ENCODE measurements at regions of chr4 and their contacts with region 1.

Region 1: DNA sequence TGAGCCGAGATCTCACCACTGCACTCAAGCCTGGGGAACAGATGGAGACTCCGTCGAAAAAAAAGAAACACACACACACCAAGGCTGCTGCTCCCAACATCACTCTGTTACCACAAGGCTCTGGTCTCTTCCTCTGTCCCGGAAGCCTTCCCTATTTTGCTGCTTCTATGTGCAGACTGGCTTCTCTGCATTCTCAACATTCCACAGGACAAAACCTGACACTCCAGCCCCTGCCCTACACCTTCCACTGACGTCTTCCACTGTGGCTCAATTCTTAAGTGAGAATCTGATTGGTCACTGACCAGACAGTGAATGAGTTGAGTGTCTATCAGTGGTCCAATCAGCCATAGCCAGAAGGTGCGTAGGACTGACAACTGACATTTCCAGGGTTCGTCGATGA is 5.9 kb downstream of the ODAPH start:
- DNase-seq: peak; percentile 87 to 88
- H3K4me3 ChIP-seq: peak overlapping the region; percentile 15
- H3K4me3 Mint-ChIP-seq: peak overlapping the region; percentile 60
- H3K27ac Mint-ChIP-seq: peak overlapping the region; percentile 81
- H3K4me1 ChIP-seq: peaks cover 23% of the 10 kb centered on the region
- H3K4me1 Mint-ChIP-seq: peaks cover 18% of the 10 kb centered on the region
- H3K27me3 ChIP-seq: no peaks in the 10 kb centered on the region
- H3K27me3 Mint-ChIP-seq: no peaks in the 10 kb centered on the region
- CTCF ChIP-seq: no peak

Region 2: DNA sequence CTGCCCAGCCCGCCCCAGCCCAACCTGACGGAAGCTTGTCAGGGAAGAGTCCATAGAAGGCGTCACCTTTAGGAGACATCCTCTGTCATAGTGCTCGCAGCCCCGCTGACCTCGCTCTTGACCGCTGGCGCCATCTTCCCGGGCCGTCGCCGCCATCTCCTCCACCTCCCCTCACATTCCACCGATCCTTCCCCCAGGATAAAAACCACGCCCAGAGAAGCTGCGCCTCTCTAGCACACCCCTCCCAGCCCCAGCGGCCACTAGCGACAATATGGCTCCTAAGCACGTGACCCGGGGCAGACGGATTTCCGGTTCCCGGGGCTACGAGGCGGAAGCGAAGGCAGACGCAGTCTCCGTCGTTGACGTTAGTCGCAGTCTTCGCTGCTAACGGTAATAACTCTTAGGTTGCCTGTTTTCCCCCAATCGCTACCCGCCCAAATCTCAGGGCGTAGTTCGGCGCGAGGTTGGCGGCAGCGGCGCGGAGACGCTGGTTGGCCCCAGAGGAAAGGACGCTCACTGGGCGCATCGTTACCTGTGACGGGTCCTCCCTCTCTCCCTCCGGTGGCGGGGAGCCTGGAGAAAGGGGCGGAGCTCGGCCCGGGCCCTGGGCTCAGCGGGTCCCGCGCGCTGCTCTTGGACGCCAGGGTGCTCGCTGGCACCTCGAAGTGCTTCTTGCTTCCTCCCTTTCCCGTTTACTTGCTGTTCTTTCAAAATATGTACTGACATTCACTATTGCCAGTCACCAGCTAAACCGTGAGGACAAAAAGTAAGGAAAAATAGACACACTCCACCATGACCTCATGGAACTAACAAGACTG is 47.5 kb before region 1 on chr4 and contains the starts of genes RCHY1 and THAP6:
- CTCF ChIA-PET with region 1: no interaction called
- POLR2A ChIA-PET with region 1: interaction called, 3 read pairs
- intact Hi-C with region 1: loop called (anchors 1 kb)
- DNase-seq: peak; percentile 96 to 98
- H3K4me3 ChIP-seq: peak within 1 kb of the TSS; percentile 73
- H3K4me3 Mint-ChIP-seq: no peak within 1 kb of the TSS
- H3K27ac Mint-ChIP-seq: peak within 1 kb of the TSS; percentile 89
- H3K4me1 ChIP-seq: peaks cover 12% of the 10 kb centered on the region; the same call in 1 of the 2 replicates
- H3K4me1 Mint-ChIP-seq: peaks cover 13% of the 10 kb centered on the region
- H3K27me3 ChIP-seq: no peaks in the 10 kb centered on the region
- H3K27me3 Mint-ChIP-seq: no peaks in the 10 kb centered on the region
- CTCF ChIP-seq: no peak
- total RNA-seq, gene RCHY1: 38.0 and 38.2 TPM in 2 replicates
- total RNA-seq, gene THAP6: 11.8 and 12.3 TPM in 2 replicates

Region 3: GRCh38 chr4:76120199-76120598 is 558.4 kb after region 1 on chr4:
- CTCF ChIA-PET with region 1: no interaction called
- POLR2A ChIA-PET with region 1: no interaction called
- intact Hi-C with region 1: no loop called
- DNase-seq: no peak
- H3K4me3 ChIP-seq: no peak overlapping the region
- H3K4me3 Mint-ChIP-seq: no peak overlapping the region
- H3K27ac Mint-ChIP-seq: no peak overlapping the region
- H3K4me1 ChIP-seq: no peaks in the 10 kb centered on the region
- H3K4me1 Mint-ChIP-seq: no peaks in the 10 kb centered on the region
- H3K27me3 ChIP-seq: no peaks in the 10 kb centered on the region
- H3K27me3 Mint-ChIP-seq: no peaks in the 10 kb centered on the region
- CTCF ChIP-seq: no peak